CD8-positive, alpha-beta T cell (primary cell): ENCODE measurements at regions of chr11 and their contacts with region 1.

Region 1: DNA sequence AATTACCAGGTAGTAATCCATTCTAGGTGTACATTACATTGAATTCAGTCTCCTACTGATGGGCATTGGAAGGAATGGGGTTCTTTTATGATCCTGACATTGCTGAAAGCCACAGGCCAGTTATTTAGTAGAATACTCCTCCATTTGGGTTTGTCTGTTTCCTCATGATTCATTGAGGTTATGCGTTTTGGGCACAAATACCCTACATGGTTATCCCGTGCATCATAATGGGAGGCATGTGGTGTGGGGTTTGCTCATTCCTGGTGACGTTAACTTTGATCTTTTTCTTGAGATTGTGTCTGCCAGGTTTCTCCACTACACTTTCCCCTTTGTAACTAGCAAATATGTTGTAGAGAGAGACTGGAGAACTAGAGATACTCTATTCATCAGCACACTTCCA is 5.5 kb downstream of the FOLR3 start:
- DNase-seq: no peak
- ATAC-seq: no peak
- H3K4me3 ChIP-seq: no peak overlapping the region
- H3K4me3 Mint-ChIP-seq: no peak overlapping the region
- H3K27ac ChIP-seq: no peak overlapping the region
- H3K27ac Mint-ChIP-seq: no peak overlapping the region
- H3K4me1 ChIP-seq: no peaks in the 10 kb centered on the region
- H3K4me1 Mint-ChIP-seq: peaks cover 3% of the 10 kb centered on the region
- H3K27me3 ChIP-seq: no peaks in the 10 kb centered on the region
- H3K27me3 Mint-ChIP-seq: peaks cover 3% of the 10 kb centered on the region
- CTCF ChIP-seq: no peak

Region 2: GRCh38 chr11:71977743-71978418 is 163.2 kb before region 1 on chr11:
- CTCF ChIA-PET with region 1: interaction called, 68 read pairs
- POLR2A ChIA-PET with region 1: no interaction called
- intact Hi-C with region 1: loop called (anchors 1 kb)
- DNase-seq: peak; percentile 25 to 69 (median 55)
- ATAC-seq: peak; percentile 62
- H3K4me3 ChIP-seq: no peak overlapping the region
- H3K4me3 Mint-ChIP-seq: no peak overlapping the region
- H3K27ac ChIP-seq: no peak overlapping the region
- H3K27ac Mint-ChIP-seq: no peak overlapping the region
- H3K4me1 ChIP-seq: no peaks in the 10 kb centered on the region
- H3K4me1 Mint-ChIP-seq: no peaks in the 10 kb centered on the region
- H3K27me3 ChIP-seq: no peaks in the 10 kb centered on the region
- H3K27me3 Mint-ChIP-seq: no peaks in the 10 kb centered on the region
- CTCF ChIP-seq: peak; percentile 78

Region 3: DNA sequence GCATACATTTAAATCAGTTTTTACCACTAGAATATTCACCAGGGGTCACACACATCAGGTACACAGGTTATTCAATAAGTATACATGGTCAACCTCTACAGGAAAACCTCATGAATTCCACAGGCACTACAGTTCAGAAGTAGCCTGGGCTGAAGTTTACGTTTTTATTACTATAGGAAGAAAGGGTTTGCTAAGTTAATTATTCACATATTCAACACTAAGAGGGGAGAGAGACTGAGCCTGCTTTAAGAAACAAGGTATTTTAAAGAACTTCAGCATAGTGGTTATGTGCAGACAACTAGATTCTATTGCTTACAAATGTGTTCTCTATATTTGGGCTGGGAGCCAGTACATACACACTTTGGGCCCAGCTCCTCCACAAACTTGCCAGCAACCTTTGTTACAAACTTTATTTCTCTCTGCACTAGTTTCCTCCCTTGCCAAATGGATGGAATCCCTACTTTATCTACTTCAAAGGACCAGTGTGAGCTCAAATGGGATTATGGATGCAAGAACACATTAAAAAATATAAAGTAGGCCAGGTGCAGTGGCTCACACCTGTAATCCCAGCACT is 110.5 kb before region 1 on chr11:
- CTCF ChIA-PET with region 1: interaction called, 112 read pairs
- POLR2A ChIA-PET with region 1: no interaction called
- intact Hi-C with region 1: loop called (anchors 1 kb)
- DNase-seq: no peak
- ATAC-seq: no peak
- H3K4me3 ChIP-seq: no peak overlapping the region
- H3K4me3 Mint-ChIP-seq: no peak overlapping the region
- H3K27ac ChIP-seq: peak overlapping the region in 1 of 2 experiments; percentile 0
- H3K27ac Mint-ChIP-seq: peak overlapping the region; percentile 64
- H3K4me1 ChIP-seq: peaks cover 38% of the 10 kb centered on the region
- H3K4me1 Mint-ChIP-seq: peaks cover 71% of the 10 kb centered on the region
- H3K27me3 ChIP-seq: no peaks in the 10 kb centered on the region
- H3K27me3 Mint-ChIP-seq: no peaks in the 10 kb centered on the region
- CTCF ChIP-seq: no peak

Region 4: GRCh38 chr11:72091005-72091691 is 49.9 kb before region 1 on chr11:
- CTCF ChIA-PET with region 1: interaction called, 23 read pairs
- POLR2A ChIA-PET with region 1: no interaction called
- intact Hi-C with region 1: loop called in 1 of 2 experiments (anchors 1 kb)
- DNase-seq: peak; percentile 50 to 80 (median 73)
- ATAC-seq: peak; percentile 99
- H3K4me3 ChIP-seq: no peak overlapping the region
- H3K4me3 Mint-ChIP-seq: no peak overlapping the region
- H3K27ac ChIP-seq: no peak overlapping the region
- H3K27ac Mint-ChIP-seq: peak overlapping the region; percentile 70
- H3K4me1 ChIP-seq: no peaks in the 10 kb centered on the region
- H3K4me1 Mint-ChIP-seq: peaks cover 12% of the 10 kb centered on the region
- H3K27me3 ChIP-seq: no peaks in the 10 kb centered on the region
- H3K27me3 Mint-ChIP-seq: no peaks in the 10 kb centered on the region
- CTCF ChIP-seq: peak; percentile 74

Region 5: DNA sequence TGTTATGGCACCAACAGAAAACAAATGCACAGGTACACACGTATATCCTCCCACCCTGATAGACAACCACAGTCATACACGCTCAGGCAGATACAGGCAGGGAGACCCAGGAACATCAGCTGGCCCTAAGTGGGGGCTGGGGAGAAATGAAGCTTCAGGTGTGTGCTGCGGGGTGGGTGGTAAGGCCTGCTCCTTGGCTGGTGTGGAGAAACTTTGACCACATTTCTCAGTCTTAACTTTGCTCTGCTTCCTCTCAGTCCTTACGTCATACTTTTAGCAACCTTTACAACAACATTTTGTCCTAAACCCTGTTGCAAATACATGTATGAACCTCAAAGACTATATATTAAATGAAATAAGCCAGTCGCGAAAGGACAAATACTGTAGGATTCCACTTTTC is 21.9 kb before region 1 on chr11:
- CTCF ChIA-PET with region 1: interaction called, 12 read pairs
- POLR2A ChIA-PET with region 1: no interaction called
- intact Hi-C with region 1: no loop called
- DNase-seq: no peak
- ATAC-seq: no peak
- H3K4me3 ChIP-seq: no peak overlapping the region
- H3K4me3 Mint-ChIP-seq: no peak overlapping the region
- H3K27ac ChIP-seq: no peak overlapping the region
- H3K27ac Mint-ChIP-seq: no peak overlapping the region
- H3K4me1 ChIP-seq: no peaks in the 10 kb centered on the region
- H3K4me1 Mint-ChIP-seq: no peaks in the 10 kb centered on the region
- H3K27me3 ChIP-seq: no peaks in the 10 kb centered on the region
- H3K27me3 Mint-ChIP-seq: peaks cover 19% of the 10 kb centered on the region
- CTCF ChIP-seq: no peak

Region 6: DNA sequence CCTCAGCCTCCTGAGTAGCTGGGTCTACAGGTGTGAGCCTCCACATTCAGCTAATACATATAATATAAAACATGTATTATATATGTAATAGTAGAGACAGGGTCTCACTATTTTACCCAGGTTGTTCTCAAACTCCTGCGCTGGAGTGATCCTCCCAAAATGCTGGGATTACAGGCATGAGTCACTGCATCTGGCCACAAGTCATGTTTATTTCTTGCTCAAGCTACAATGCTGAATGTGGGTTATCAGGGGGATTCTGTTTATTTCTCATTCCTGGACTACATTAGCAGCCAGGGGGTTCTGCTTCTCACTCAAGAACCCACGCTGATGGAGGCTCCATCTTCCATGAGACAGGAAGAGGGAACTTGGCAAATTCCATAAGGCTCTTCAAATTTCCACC is 19.3 kb after region 1 on chr11:
- CTCF ChIA-PET with region 1: interaction called, 37 read pairs
- POLR2A ChIA-PET with region 1: no interaction called
- intact Hi-C with region 1: no loop called
- DNase-seq: no peak
- ATAC-seq: no peak
- H3K4me3 ChIP-seq: no peak overlapping the region
- H3K4me3 Mint-ChIP-seq: no peak overlapping the region
- H3K27ac ChIP-seq: no peak overlapping the region
- H3K27ac Mint-ChIP-seq: no peak overlapping the region
- H3K4me1 ChIP-seq: no peaks in the 10 kb centered on the region
- H3K4me1 Mint-ChIP-seq: no peaks in the 10 kb centered on the region
- H3K27me3 ChIP-seq: no peaks in the 10 kb centered on the region
- H3K27me3 Mint-ChIP-seq: peaks cover 23% of the 10 kb centered on the region
- CTCF ChIP-seq: no peak